ENCODE measurements at regions of chr6 and their contacts with region 1.

Region 1: GRCh38 chr6:112180095-112180820 is 74.1 kb downstream of the LAMA4 start:
- DNase-seq: peak; percentile 57
- H3K4me3 ChIP-seq: no peak overlapping the region
- H3K27ac ChIP-seq: no peak overlapping the region
- H3K4me1 ChIP-seq: no peaks in the 10 kb centered on the region
- H3K27me3 ChIP-seq: no peaks in the 10 kb centered on the region
- CTCF ChIP-seq: peak; percentile 48 to 76

Region 2: DNA sequence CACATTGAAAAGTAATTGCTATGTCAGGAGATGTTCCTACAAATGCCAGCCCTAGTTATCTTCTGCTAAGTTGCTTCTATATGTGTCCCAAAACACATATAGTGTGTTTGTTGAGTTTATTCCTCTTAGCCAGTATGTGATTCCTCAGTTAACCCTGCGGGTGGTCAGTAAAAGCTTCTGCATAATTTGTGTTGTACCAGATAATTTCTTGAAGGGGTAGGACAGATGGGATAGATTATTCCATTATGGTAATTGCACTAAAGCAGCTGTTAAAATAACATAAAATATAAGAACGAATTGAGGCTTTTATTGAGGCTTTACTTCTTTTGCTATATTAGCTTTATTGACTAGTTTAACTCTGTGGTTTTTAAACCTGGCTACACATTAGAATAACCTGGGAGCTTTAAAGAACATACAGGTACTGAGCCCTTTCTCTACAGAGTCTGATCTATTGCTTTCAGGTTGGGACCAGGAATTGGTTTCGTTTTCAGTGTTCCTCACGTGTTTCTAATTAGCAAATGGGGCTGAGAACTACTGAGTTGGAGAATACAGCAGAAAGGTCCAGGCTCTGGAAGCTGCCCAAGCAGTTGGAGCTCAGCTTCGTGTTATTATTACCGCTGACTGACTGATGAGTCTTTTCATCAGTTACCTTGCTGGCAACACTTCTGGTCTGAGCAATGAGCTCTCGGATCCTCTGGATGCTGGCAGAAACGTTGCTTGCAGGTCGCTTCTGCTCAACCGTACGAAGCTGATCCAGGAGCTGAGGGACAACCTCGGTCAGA is 35.9 kb before region 1 on chr6:
- CTCF ChIA-PET with region 1: no interaction called
- dilution Hi-C with region 1: no loop called
- in situ Hi-C with region 1: no loop called
- intact Hi-C with region 1: no loop called
- DNase-seq: no peak
- H3K4me3 ChIP-seq: no peak overlapping the region
- H3K27ac ChIP-seq: no peak overlapping the region
- H3K4me1 ChIP-seq: no peaks in the 10 kb centered on the region
- H3K27me3 ChIP-seq: peaks cover 4% of the 10 kb centered on the region
- CTCF ChIP-seq: no peak

Region 3: DNA sequence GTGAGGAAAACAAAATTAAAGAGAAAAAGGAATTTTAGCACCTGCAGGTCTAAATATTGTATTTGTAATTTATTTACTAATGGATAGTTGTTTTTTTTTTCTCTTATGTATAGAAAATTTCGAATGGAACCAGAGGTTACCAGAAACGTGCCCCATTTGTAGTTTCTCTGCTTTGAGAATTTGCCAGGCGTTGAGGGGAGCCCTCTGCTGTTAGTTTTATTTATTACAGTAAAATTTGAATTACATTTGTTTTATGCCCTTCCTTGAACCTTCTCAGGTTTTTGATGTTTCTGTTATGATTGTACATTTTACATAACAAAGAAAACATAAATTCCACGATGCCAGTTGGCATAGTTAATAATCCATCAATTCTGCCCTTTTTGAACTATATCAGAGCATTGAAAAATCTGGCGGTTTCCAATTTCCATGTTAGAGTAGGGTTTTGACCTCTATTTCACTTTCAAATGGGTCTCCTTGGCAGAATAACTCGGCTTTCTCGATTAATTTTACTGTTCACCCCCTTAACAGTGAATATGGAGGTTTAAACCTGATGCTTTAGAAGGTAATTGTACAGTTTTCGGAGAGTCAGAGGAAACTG is 131.8 kb after region 1 on chr6:
- CTCF ChIA-PET with region 1: interaction called, 7 read pairs
- dilution Hi-C with region 1: no loop called
- in situ Hi-C with region 1: loop called (anchors 5 kb)
- intact Hi-C with region 1: loop called (anchors 1 kb)
- DNase-seq: no peak
- H3K4me3 ChIP-seq: no peak overlapping the region
- H3K27ac ChIP-seq: no peak overlapping the region
- H3K4me1 ChIP-seq: no peaks in the 10 kb centered on the region
- H3K27me3 ChIP-seq: no peaks in the 10 kb centered on the region
- CTCF ChIP-seq: peak; percentile 57 to 67

Region 4: DNA sequence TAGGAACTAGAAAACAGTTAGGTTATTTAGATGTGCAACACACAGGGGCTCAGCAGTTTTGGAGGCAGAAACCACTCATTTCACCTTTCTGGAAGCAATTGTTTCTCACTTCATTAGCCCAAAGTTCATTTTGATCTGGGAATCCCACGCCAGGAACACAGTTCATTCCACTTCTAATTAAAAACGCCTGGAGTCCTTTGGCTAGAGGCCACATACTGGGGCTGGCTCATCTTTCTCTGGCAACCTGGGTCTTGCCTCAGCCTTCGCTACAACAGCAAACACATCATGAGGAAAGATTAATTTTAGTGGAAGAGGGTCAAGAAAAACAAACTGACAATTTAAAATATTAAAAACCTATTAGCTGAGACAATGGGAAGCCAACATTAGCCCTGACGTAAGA is 236.6 kb after region 1 on chr6:
- CTCF ChIA-PET with region 1: no interaction called
- dilution Hi-C with region 1: no loop called
- in situ Hi-C with region 1: no loop called
- intact Hi-C with region 1: no loop called
- DNase-seq: peak; percentile 10
- H3K4me3 ChIP-seq: no peak overlapping the region
- H3K27ac ChIP-seq: no peak overlapping the region
- H3K4me1 ChIP-seq: peaks cover 10% of the 10 kb centered on the region
- H3K27me3 ChIP-seq: no peaks in the 10 kb centered on the region
- CTCF ChIP-seq: no peak

Measured in mammary epithelial cell (primary cell).